ENCODE measurements at regions of chr5 and their contacts with region 1.

Region 1: GRCh38 chr5:88660947-88661805 is 221.8 kb downstream of the MEF2C start:
- DNase-seq: peak; percentile 77
- ATAC-seq: peak; percentile 99
- H3K4me3 ChIP-seq: peak overlapping the region; percentile 58
- H3K27ac ChIP-seq: no peak overlapping the region
- H3K4me1 ChIP-seq: peaks cover 2% of the 10 kb centered on the region; the same call in 1 of the 2 replicates
- H3K27me3 ChIP-seq: peaks cover 42% of the 10 kb centered on the region
- CTCF ChIP-seq: no peak
- POLR2A ChIP-seq: no peak
- RAD21 ChIP-seq: no peak

Region 2: GRCh38 chr5:88262116-88262515 is 399.1 kb before region 1 on chr5:
- CTCF ChIA-PET with region 1: no interaction called
- POLR2A ChIA-PET with region 1: no interaction called
- dilution Hi-C with region 1: no loop called
- in situ Hi-C with region 1: no loop called
- intact Hi-C with region 1: loop called (anchors 5 kb)
- DNase-seq: peak; percentile 54
- ATAC-seq: peak; percentile 44; the same call in 1 of the 2 replicates
- H3K4me3 ChIP-seq: no peak overlapping the region
- H3K27ac ChIP-seq: no peak overlapping the region
- H3K4me1 ChIP-seq: no peaks in the 10 kb centered on the region
- H3K27me3 ChIP-seq: no peaks in the 10 kb centered on the region
- CTCF ChIP-seq: no peak
- POLR2A ChIP-seq: no peak
- RAD21 ChIP-seq: no peak

Region 3: DNA sequence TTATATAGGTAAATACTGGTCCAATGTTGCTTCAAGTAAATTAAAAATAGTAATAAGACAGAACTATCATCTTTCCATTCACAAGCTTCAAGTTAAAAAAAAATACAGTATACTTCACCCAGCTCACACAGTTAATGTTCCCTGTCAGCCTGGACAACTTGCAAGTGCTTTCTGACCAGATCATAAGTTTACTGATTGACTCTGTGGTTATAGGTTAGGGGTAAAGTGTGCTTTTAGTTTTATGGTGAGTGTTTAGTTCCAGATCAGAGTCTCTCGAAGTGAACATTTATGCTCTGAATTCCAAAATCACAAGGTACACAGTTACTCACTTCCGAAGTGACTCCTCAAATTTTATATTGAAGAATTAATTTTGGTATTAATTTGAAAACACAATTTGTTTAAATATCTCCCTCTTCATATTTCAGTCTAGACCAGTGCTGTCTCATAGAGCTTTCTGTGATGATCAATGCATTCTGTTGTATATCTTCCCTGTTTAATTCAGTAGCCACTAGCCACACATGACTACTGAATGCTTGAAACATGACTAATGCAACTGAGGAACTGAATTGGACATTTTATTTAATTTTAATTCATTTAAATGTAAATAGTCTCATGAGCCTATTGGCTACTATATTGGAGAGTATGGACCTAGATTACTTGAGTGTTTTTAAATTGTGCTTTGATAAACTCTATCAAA is 131.1 kb after region 1 on chr5:
- CTCF ChIA-PET with region 1: no interaction called
- POLR2A ChIA-PET with region 1: no interaction called
- dilution Hi-C with region 1: no loop called
- in situ Hi-C with region 1: no loop called
- intact Hi-C with region 1: no loop called
- DNase-seq: peak; percentile 69
- ATAC-seq: peak; percentile 67
- H3K4me3 ChIP-seq: no peak overlapping the region
- H3K27ac ChIP-seq: no peak overlapping the region
- H3K4me1 ChIP-seq: peaks cover 2% of the 10 kb centered on the region; the same call in 1 of the 2 replicates
- H3K27me3 ChIP-seq: no peaks in the 10 kb centered on the region
- CTCF ChIP-seq: no peak
- POLR2A ChIP-seq: no peak
- RAD21 ChIP-seq: no peak

Measured in IMR-90 (cell line).